ENCODE measurements at regions of chr7 and their contacts with region 1.

Region 1: GRCh38 chr7:87416682-87417587 is 58.5 kb downstream of the ABCB4 start:
- DNase-seq: peak; percentile 5 to 84 (median 51)
- ATAC-seq: peak; percentile 45 to 71 (median 62)
- H3K4me3 ChIP-seq: no peak overlapping the region
- H3K4me3 Mint-ChIP-seq: no peak overlapping the region
- H3K27ac ChIP-seq: no peak overlapping the region
- H3K27ac Mint-ChIP-seq: no peak overlapping the region
- H3K4me1 ChIP-seq: no peaks in the 10 kb centered on the region
- H3K4me1 Mint-ChIP-seq: no peaks in the 10 kb centered on the region
- H3K27me3 ChIP-seq: peaks cover 0 to 6% of the 10 kb centered on the region in 2 experiments
- H3K27me3 Mint-ChIP-seq: no peaks in the 10 kb centered on the region

Region 2: DNA sequence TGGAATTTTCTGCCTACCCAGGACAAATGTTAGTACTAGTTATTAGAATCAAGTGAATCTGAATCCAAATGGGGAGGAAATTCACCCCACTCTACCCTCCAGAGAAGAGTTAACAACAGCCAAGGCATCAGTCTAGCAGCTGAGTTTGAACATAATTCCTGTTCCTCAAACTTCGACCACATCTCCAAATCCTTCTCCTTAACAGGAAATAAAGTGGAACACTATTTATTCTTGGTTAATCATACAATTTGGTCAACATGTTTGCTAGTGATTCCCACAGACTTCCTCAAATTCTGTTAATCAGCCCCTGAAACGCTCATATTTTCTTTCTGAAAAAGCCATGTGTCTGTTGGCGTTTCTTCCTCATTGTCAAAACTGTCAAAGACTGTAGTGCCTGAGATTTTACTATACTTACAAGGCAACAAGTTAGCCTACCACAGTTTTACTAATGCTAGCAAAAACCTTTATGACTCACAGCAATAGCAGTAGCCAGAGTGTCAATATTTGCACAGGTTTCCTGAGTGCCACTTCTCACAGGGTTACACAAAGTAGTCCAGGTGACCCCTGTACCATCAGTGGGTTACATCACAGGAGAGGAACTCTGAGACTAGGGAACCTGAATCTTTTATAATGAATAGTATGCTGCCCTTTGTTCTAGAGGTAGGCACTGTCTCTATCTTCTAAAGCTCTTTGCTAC is 570.3 kb before region 1 on chr7:
- CTCF ChIA-PET with region 1: no interaction called
- POLR2A ChIA-PET with region 1: no interaction called
- DNase-seq: no peak
- ATAC-seq: no peak
- H3K4me3 ChIP-seq: no peak overlapping the region
- H3K4me3 Mint-ChIP-seq: no peak overlapping the region
- H3K27ac ChIP-seq: no peak overlapping the region
- H3K27ac Mint-ChIP-seq: no peak overlapping the region
- H3K4me1 ChIP-seq: no peaks in the 10 kb centered on the region
- H3K4me1 Mint-ChIP-seq: no peaks in the 10 kb centered on the region
- H3K27me3 ChIP-seq: no peaks in the 10 kb centered on the region
- H3K27me3 Mint-ChIP-seq: no peaks in the 10 kb centered on the region

Region 3: GRCh38 chr7:87312215-87312865 is 104.6 kb before region 1 on chr7:
- CTCF ChIA-PET with region 1: interaction called, 73 to 108 read pairs
- POLR2A ChIA-PET with region 1: no interaction called
- DNase-seq: peak; percentile 6 to 82 (median 46)
- ATAC-seq: peak; percentile 76 to 91 (median 80)
- H3K4me3 ChIP-seq: no peak overlapping the region
- H3K4me3 Mint-ChIP-seq: no peak overlapping the region
- H3K27ac ChIP-seq: no peak overlapping the region
- H3K27ac Mint-ChIP-seq: no peak overlapping the region
- H3K4me1 ChIP-seq: peaks cover 0 to 3% of the 10 kb centered on the region in 2 experiments
- H3K4me1 Mint-ChIP-seq: peaks cover 0 to 7% (median 6%) of the 10 kb centered on the region in 3 donors
- H3K27me3 ChIP-seq: no peaks in the 10 kb centered on the region
- H3K27me3 Mint-ChIP-seq: no peaks in the 10 kb centered on the region

Region 4: DNA sequence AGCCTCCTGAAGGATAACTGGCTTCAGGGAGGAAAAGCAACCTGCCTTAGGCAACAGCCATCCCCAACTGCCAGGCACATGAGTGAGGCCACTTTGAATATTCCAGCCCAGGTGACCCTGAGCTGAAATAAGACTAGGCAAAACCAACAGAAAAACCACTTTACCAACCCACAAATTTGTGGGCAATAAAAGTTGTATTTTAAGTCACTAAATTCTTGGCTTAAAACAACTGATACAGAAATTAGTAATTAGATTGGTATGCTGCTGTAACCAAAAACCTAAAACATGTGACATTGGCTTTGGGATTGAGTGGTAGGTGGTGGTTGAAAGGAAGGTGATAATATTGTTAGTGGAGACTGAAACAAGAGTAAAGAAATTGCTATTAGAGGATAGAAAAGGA is 18.6 kb after region 1 on chr7:
- CTCF ChIA-PET with region 1: interaction called, 4 to 10 read pairs
- POLR2A ChIA-PET with region 1: no interaction called
- DNase-seq: no peak
- ATAC-seq: no peak
- H3K4me3 ChIP-seq: no peak overlapping the region
- H3K4me3 Mint-ChIP-seq: no peak overlapping the region
- H3K27ac ChIP-seq: no peak overlapping the region
- H3K27ac Mint-ChIP-seq: no peak overlapping the region
- H3K4me1 ChIP-seq: no peaks in the 10 kb centered on the region
- H3K4me1 Mint-ChIP-seq: no peaks in the 10 kb centered on the region
- H3K27me3 ChIP-seq: no peaks in the 10 kb centered on the region
- H3K27me3 Mint-ChIP-seq: peaks cover 2 to 14% of the 10 kb centered on the region in 2 donors